ENCODE measurements at regions of chr1 and their contacts with region 1.

Region 1: DNA sequence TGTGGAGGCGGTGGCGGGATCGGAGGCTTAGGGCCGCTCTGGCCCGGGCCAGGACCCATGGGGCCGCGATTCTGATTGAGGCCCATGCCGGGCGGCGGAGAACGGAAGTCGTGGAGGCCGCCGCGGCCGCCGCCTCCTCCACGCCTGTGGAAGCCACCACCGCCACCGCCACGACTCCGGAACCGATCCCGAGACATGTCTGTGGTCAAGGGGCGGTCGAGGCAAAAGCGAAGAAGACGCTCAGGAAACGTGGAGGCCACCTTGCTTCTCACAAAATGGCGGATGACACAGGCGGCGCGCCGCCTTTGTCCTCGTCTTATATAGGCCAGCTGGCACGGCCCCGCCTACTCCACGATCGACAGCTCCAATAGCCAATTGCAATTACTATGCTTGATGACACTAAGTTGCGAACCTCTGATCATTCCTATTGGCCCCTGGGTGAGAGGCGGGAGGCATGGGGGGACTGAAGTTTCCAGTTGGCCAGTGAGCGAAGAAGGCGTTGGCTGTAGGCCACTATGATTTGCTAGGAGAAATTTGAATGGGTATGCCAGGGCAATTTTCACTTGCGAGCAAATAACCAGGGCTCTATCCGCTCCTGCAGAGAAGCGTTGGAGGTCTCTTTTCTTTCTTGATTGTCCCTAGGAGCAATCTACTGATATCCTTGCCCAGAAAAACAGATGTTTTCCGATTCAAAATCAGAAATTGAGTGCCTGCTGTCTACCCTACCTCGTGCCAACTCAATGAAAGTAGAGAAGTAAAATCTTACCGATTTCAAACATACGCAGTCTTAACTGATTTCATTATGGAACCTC is at the start of gene SFPQ:
- DNase-seq: peak; percentile 98
- H3K4me3 Mint-ChIP-seq: peak within 1 kb of the TSS; percentile 96
- H3K27ac Mint-ChIP-seq: peak within 1 kb of the TSS; percentile 98
- H3K4me1 Mint-ChIP-seq: peaks cover 39% of the 10 kb centered on the region
- H3K27me3 Mint-ChIP-seq: no peaks in the 10 kb centered on the region
- total RNA-seq, gene SFPQ: 260 to 269 TPM

Region 2: GRCh38 chr1:34984793-34985608 is 208.1 kb before region 1 on chr1 and contains the start of gene TMEM35B:
- CTCF ChIA-PET with region 1: no interaction called
- intact Hi-C with region 1: loop called (anchors 5 kb)
- DNase-seq: peak; percentile 81
- H3K4me3 Mint-ChIP-seq: peak within 1 kb of the TSS; percentile 97
- H3K27ac Mint-ChIP-seq: peak within 1 kb of the TSS; percentile 93
- H3K4me1 Mint-ChIP-seq: peaks cover 49% of the 10 kb centered on the region
- H3K27me3 Mint-ChIP-seq: no peaks in the 10 kb centered on the region
- total RNA-seq, gene TMEM35B: 18.2 to 19.9 TPM

Region 3: GRCh38 chr1:35037206-35037605 is 155.9 kb before region 1 on chr1:
- CTCF ChIA-PET with region 1: no interaction called
- intact Hi-C with region 1: no loop called
- DNase-seq: no peak
- H3K4me3 Mint-ChIP-seq: no peak overlapping the region
- H3K27ac Mint-ChIP-seq: no peak overlapping the region
- H3K4me1 Mint-ChIP-seq: peaks cover 2% of the 10 kb centered on the region
- H3K27me3 Mint-ChIP-seq: no peaks in the 10 kb centered on the region

Region 4: DNA sequence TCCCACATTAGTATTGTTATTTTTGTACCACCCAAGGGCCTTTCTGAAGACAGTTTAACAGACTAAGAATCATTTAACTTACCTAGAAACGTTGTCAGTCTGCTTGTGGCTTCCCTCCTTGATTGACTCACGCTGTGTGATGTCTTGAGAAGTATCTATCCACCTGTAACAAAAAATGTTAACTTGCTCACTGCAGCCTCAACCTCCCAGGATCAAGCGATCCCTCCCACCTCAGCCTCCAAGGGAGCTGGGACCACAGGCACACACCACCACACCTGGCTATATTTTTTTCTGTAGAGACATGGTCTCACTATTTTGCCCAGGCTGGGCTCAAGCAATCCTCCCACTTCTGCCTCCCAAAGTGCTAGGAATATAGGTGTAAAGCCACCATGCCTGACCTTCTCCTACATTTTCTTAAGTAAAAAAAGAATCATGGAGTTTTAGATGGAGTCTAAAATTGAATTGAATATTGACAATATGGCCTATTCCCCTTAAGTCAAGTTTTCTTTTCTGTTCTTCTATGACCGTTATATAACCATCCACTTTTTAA is 15.7 kb before region 1 on chr1:
- CTCF ChIA-PET with region 1: interaction called, 3 read pairs
- intact Hi-C with region 1: loop called (anchors 1 kb)
- DNase-seq: no peak
- H3K4me3 Mint-ChIP-seq: no peak overlapping the region
- H3K27ac Mint-ChIP-seq: no peak overlapping the region
- H3K4me1 Mint-ChIP-seq: peaks cover 36% of the 10 kb centered on the region
- H3K27me3 Mint-ChIP-seq: no peaks in the 10 kb centered on the region

Region 5: GRCh38 chr1:35298464-35298863 is 105.4 kb after region 1 on chr1:
- CTCF ChIA-PET with region 1: no interaction called
- intact Hi-C with region 1: loop called (anchors 2 kb)
- DNase-seq: peak; percentile 40
- H3K4me3 Mint-ChIP-seq: no peak overlapping the region
- H3K27ac Mint-ChIP-seq: peak overlapping the region; percentile 28
- H3K4me1 Mint-ChIP-seq: peaks cover 13% of the 10 kb centered on the region
- H3K27me3 Mint-ChIP-seq: no peaks in the 10 kb centered on the region

Region 6: GRCh38 chr1:35715568-35716002 is 522.5 kb after region 1 on chr1:
- CTCF ChIA-PET with region 1: no interaction called
- intact Hi-C with region 1: loop called (anchors 5 kb)
- DNase-seq: peak; percentile 88
- H3K4me3 Mint-ChIP-seq: peak overlapping the region; percentile 42
- H3K27ac Mint-ChIP-seq: no peak overlapping the region
- H3K4me1 Mint-ChIP-seq: peaks cover 24% of the 10 kb centered on the region
- H3K27me3 Mint-ChIP-seq: no peaks in the 10 kb centered on the region

Measured in activated naive CD4-positive, alpha-beta T cell treated with anti-CD3 and anti-CD28 coated beads for 36 hours (primary cell).